ENCODE measurements at regions of chr3 and their contacts with region 1.

Region 1: DNA sequence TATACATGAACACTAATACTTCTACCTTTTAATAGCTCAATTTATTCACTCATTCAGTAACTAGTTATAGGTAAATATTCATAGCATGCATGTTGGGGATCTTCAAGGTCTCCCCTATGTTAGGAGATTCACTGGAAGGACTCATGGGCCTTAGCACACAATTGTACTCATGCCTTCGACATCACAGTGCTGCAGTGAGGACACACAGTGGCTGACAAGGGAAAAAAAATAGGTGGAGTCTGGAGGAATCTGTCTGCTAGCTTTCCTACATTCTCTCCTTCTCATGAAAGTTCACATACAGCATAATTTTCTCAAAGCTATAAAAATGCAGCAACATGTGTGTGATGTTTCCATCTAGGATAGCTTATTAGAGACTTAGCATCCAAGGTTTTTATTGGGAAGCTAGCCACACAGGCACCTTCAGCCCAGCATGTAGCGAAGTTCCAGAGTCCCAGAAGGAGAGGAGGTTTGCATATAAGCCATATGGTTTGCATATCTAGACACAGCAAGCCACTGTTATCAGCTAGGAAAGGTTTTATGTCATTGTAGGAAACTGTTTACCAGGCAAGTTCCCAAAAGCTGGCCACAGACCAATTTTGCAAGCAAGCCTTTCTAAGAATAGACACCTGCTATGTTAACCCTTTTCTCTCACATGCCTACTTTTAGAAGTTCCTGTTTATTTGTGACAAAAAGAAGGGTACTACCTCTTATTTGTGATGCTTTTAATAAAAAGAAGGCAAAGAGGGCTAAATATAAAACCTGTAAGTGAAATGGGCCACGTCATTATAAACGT is 46.4 kb downstream of the MORC1 start:
- DNase-seq: peak; percentile 13
- H3K4me3 Mint-ChIP-seq: no peak overlapping the region
- H3K27ac Mint-ChIP-seq: no peak overlapping the region
- H3K4me1 Mint-ChIP-seq: no peaks in the 10 kb centered on the region
- H3K27me3 Mint-ChIP-seq: no peaks in the 10 kb centered on the region
- CTCF ChIP-seq: no peak

Region 2: DNA sequence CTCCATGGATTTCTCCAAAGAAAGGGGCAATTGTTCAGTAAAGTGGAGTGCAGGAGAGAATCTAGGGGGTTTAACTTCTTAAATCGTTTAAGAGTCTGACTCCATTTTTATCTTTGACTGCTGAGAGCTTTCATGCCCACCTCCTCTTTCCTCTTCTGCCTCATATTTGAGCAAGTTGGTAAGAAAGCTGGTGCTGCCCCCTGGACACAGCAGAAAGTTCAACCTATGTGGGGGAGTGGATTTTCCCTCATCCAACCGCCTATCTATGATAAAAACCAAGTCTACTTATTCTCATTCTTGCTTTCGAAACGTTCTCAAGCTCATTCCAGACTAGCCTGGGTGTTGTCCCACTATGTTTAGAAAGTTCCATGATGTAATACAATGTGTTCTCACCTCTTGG is 749.2 kb before region 1 on chr3:
- CTCF ChIA-PET with region 1: no interaction called
- POLR2A ChIA-PET with region 1: no interaction called
- intact Hi-C with region 1: no loop called
- DNase-seq: no peak
- H3K4me3 Mint-ChIP-seq: no peak overlapping the region
- H3K27ac Mint-ChIP-seq: no peak overlapping the region
- H3K4me1 Mint-ChIP-seq: peaks cover 21% of the 10 kb centered on the region
- H3K27me3 Mint-ChIP-seq: no peaks in the 10 kb centered on the region
- CTCF ChIP-seq: no peak

Region 3: DNA sequence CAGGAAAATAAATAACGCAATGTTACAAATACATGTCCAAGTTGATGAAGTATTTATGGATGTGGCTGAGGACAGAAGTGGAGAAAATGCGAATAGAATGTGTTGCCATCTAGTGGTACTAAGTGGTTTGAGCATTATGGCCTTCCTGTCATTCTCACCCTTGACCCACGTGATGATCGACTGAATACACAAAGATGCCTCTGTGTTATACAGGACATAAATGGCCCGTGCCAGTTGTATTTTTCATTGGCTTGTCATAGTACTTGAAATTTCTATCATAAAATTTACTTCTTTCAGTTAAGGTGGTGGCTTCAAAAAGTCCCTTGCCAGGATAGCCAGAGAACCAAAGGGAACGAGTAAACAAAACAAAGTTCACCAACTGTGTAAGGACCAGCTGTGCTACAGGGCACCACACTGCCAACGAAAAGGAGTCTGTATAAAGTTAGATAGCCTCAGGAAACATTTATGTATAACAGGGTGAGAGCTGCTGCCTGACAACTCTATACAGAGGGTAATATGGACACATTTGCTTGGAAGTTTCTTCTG is 664.8 kb before region 1 on chr3:
- CTCF ChIA-PET with region 1: no interaction called
- POLR2A ChIA-PET with region 1: no interaction called
- intact Hi-C with region 1: no loop called
- DNase-seq: peak; percentile 59
- H3K4me3 Mint-ChIP-seq: no peak overlapping the region
- H3K27ac Mint-ChIP-seq: no peak overlapping the region
- H3K4me1 Mint-ChIP-seq: peaks cover 5% of the 10 kb centered on the region
- H3K27me3 Mint-ChIP-seq: no peaks in the 10 kb centered on the region
- CTCF ChIP-seq: peak; percentile 38

Region 4: GRCh38 chr3:109081746-109082510 is 10.4 kb after region 1 on chr3:
- CTCF ChIA-PET with region 1: interaction called, 16 read pairs
- POLR2A ChIA-PET with region 1: interaction called, 3 read pairs
- intact Hi-C with region 1: no loop called
- DNase-seq: peak; percentile 71
- H3K4me3 Mint-ChIP-seq: no peak overlapping the region
- H3K27ac Mint-ChIP-seq: peak overlapping the region; percentile 55
- H3K4me1 Mint-ChIP-seq: peaks cover 6% of the 10 kb centered on the region
- H3K27me3 Mint-ChIP-seq: no peaks in the 10 kb centered on the region
- CTCF ChIP-seq: peak; percentile 75

Measured in MCF 10A (cell line).